A549 (cell line): ENCODE measurements at regions of chr9 and their contacts with region 1.

Region 1: DNA sequence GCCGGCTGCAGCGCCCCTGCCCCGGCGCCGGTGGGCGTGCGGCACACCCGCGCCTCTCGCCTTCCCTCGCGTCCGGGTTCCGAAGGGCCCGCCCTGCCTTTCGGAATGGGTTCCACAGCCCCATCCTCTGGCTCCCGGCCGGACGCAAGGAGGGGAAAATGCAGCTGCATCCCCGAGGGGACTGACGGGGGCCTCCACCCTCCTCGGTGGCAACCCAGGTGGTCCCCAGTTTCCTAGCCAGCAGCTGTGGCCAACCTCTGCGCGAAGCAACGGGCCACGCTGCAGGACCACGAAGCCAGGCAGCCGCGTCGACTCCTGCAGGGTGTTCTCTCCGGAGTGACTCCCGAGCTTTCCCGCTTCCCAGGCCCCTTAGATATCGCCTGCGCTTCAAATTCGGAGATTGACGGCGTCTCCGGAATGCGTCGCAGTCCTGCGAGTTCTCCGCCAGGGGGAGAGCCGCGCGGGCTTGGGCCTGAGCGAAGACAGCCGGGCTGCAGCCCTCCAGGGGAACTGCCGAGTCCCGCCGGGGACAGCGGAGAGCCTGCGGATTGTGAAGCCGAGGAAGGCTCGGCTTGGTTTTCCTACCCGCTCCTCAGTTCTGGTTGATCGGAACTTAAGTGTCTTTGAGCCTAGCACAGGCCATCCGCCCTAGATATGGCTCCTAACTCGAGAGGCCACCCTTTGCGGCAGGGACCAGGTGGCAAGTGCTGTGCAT is 582 bp upstream of the APBA1 start:
- DNase-seq: peak; percentile 73 to 82
- ATAC-seq: peak; percentile 91 to 97
- H3K4me3 ChIP-seq: peak overlapping the region; percentile 73
- H3K27ac ChIP-seq: peak overlapping the region; percentile 53 to 84; a peak in 5 of 6 replicates
- H3K4me1 ChIP-seq: no peaks in the 10 kb centered on the region
- CTCF ChIP-seq: peak; percentile 66
- EP300 ChIP-seq: no peak
- POLR2A ChIP-seq: no peak
- RAD21 ChIP-seq: peak; percentile 62 to 70

Region 2: GRCh38 chr9:69573651-69574050 is 99.1 kb before region 1 on chr9:
- CTCF ChIA-PET with region 1: no interaction called
- POLR2A ChIA-PET with region 1: no interaction called
- DNase-seq: no peak
- ATAC-seq: no peak
- H3K4me3 ChIP-seq: no peak overlapping the region
- H3K27ac ChIP-seq: no peak overlapping the region
- H3K4me1 ChIP-seq: no peaks in the 10 kb centered on the region
- CTCF ChIP-seq: no peak
- EP300 ChIP-seq: no peak
- POLR2A ChIP-seq: no peak
- RAD21 ChIP-seq: no peak

Region 3: GRCh38 chr9:69655065-69655464 is 17.7 kb before region 1 on chr9:
- CTCF ChIA-PET with region 1: interaction called, 12 read pairs
- POLR2A ChIA-PET with region 1: no interaction called
- DNase-seq: no peak
- ATAC-seq: no peak
- H3K4me3 ChIP-seq: no peak overlapping the region
- H3K27ac ChIP-seq: no peak overlapping the region
- H3K4me1 ChIP-seq: no peaks in the 10 kb centered on the region
- CTCF ChIP-seq: no peak
- EP300 ChIP-seq: no peak
- POLR2A ChIP-seq: no peak
- RAD21 ChIP-seq: no peak

Region 4: DNA sequence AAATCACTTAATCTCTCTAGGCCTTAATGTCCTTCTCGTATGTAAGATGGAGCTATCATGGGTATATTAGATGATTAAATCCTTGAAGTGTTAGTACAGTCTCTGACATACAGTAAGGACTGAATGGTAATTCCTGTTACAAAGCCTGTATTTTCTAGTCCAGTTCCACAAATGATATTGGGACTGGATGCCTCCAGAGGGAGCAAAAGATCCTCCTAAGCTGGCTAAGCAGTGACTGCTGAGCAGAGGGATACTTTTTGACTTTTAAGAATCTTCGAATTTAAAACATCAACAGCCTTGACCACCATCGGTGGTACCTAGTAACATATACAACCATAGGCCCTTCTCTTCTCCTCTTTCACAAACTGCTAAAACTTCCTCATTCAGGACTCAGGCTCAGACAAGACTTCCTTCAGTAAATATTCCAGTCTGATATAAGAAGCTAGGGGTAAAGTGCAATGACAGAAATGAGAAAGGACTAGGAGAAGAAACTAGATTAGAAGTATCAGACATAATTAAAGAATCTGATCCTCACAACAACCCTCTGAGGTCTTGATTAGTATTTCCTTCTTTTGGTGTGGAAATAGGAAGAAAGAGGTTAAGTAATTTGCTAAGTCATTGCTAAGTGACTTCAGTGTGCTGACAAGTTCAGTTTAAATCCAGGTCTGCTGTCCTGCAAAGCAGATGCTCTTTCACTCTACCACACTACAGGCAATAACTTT is 73.1 kb after region 1 on chr9:
- CTCF ChIA-PET with region 1: interaction called, 16 read pairs
- POLR2A ChIA-PET with region 1: no interaction called
- DNase-seq: peak in 1 of 2 experiments; percentile 53
- ATAC-seq: peak; percentile 89 to 91; a peak in 5 of 6 replicates
- H3K4me3 ChIP-seq: no peak overlapping the region
- H3K27ac ChIP-seq: peak overlapping the region; percentile 23 to 59; a peak in 5 of 6 replicates
- H3K4me1 ChIP-seq: peaks cover 38% of the 10 kb centered on the region
- CTCF ChIP-seq: peak; percentile 47
- EP300 ChIP-seq: no peak
- POLR2A ChIP-seq: no peak
- RAD21 ChIP-seq: peak; percentile 56 to 61

Region 5: DNA sequence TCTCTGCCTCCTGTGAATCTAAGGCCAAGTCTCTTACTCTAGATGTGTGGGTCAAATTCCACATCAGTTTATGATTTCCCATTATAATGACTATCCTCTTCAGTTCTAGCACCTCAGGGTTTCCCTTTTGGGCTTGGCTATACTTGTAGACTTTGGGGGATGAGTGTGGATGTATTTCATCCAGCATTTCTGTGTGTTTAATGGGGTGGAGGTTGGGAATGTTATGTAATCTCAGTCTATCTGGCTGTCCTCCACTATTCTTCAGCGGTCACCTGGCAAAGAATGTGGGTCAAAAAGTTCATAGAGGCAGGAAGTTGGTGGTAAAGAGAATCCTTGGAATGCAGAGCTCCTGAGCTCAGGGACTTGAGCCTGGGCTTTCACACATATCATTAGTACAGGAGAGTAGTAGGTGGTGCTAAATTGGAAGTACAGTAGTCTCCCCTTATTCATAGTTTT is 212.7 kb after region 1 on chr9:
- CTCF ChIA-PET with region 1: interaction called, 11 read pairs
- POLR2A ChIA-PET with region 1: no interaction called
- DNase-seq: peak; percentile 18 to 71
- ATAC-seq: peak; percentile 71 to 87
- H3K4me3 ChIP-seq: no peak overlapping the region
- H3K27ac ChIP-seq: peak overlapping the region; percentile 69 to 72
- H3K4me1 ChIP-seq: peaks cover 29% of the 10 kb centered on the region
- CTCF ChIP-seq: no peak
- EP300 ChIP-seq: peak; percentile 42 to 57; a peak in 3 of 5 replicates
- POLR2A ChIP-seq: no peak
- RAD21 ChIP-seq: no peak; a peak in 1 of 5 replicates

Region 6: DNA sequence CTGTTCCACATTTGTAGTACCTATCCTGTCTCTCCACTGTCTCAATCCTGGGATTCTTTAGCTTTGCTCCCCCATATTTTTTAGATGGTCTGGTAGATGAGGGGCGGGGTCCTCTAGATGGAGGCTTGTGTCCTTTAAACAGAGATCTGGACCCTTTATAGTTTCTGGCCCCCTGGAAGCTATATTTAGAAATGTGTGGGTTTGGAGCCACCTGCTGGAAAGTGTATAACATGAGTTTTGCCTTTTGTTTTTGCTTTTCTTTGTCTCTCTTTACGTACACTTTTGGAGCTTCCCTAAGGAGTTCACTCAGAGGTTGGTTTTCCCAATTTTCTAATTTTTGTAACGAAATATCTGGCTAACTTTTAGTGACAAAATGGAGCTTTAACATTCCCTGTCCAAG is 258.6 kb after region 1 on chr9:
- CTCF ChIA-PET with region 1: interaction called, 21 read pairs
- POLR2A ChIA-PET with region 1: no interaction called
- DNase-seq: no peak
- ATAC-seq: peak; percentile 57 to 60; a peak in 2 of 6 replicates
- H3K4me3 ChIP-seq: no peak overlapping the region
- H3K27ac ChIP-seq: no peak overlapping the region
- H3K4me1 ChIP-seq: no peaks in the 10 kb centered on the region
- CTCF ChIP-seq: peak; percentile 64
- EP300 ChIP-seq: no peak
- POLR2A ChIP-seq: no peak
- RAD21 ChIP-seq: peak; percentile 72 to 73